PC-9 (cell line): ENCODE measurements at regions of chr15 and their contacts with region 1.

Region 1: GRCh38 chr15:78329625-78330024 is 10.5 kb upstream of the CRABP1 start:
- DNase-seq: peak; percentile 14 to 43
- H3K4me3 ChIP-seq: no peak overlapping the region
- H3K27ac ChIP-seq: no peak overlapping the region
- H3K4me1 ChIP-seq: peaks cover 8% of the 10 kb centered on the region; the same call in 1 of the 2 replicates
- H3K27me3 ChIP-seq: no peaks in the 10 kb centered on the region
- CTCF ChIP-seq: no peak

Region 2: GRCh38 chr15:77002954-77003912 is 1326.4 kb before region 1 on chr15:
- CTCF ChIA-PET with region 1: interaction called, 16 read pairs
- POLR2A ChIA-PET with region 1: no interaction called
- intact Hi-C with region 1: no loop called
- DNase-seq: no peak
- H3K4me3 ChIP-seq: no peak overlapping the region
- H3K27ac ChIP-seq: no peak overlapping the region
- H3K4me1 ChIP-seq: no peaks in the 10 kb centered on the region
- H3K27me3 ChIP-seq: peaks cover 4% of the 10 kb centered on the region; the same call in 1 of the 2 replicates
- CTCF ChIP-seq: no peak

Region 3: DNA sequence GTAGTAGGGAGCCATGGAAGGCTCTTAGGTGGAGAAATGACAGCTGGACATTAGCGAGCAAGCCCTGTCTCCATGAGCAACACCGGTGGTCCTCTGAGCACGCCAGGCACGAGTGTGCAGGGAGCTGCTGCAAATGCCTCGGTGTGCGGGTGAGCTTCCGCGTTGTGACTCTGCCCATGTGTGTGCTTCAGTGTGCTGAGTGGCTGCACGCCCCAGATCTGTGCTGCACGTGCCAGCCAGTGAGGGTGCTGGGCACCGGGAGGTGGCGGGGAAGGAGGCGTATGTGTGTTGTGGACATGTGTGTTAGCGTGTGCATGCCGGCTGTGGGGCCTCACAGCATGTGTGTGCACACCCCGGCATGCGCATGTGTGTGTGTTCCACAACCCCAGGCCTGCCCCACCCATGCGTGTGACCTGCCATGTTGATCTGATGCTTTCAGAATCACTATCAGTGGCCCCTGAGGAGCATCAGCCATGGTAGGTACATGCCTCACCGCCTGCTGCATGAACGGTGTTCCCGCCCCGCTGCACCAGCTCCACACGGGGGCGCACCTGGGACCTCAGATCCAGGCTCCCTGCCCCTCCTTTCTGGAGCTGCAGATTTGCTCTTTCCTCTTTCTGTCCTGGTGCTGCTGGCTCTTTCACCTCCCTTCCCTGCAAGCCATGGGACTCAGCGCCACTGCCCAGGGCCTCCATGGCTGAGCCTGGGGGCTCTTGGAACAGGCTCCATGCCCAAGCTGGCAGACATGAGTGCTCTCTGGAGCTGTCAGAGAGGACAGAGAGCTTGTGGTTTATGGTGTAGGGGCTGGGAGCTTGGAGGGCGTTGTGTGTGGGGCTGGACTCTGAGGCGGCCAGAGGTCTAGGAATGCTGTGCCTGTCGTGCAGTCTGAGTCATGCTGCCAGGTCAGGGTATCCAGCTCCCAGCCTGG is 421.5 kb before region 1 on chr15:
- CTCF ChIA-PET with region 1: no interaction called
- POLR2A ChIA-PET with region 1: no interaction called
- intact Hi-C with region 1: no loop called
- DNase-seq: peak in 1 of 2 experiments; percentile 57
- H3K4me3 ChIP-seq: no peak overlapping the region
- H3K27ac ChIP-seq: no peak overlapping the region
- H3K4me1 ChIP-seq: no peaks in the 10 kb centered on the region
- H3K27me3 ChIP-seq: no peaks in the 10 kb centered on the region
- CTCF ChIP-seq: no peak

Region 4: GRCh38 chr15:78353093-78353492 is 23.5 kb after region 1 on chr15:
- CTCF ChIA-PET with region 1: no interaction called
- POLR2A ChIA-PET with region 1: no interaction called
- intact Hi-C with region 1: loop called (anchors 1 kb)
- DNase-seq: no peak
- H3K4me3 ChIP-seq: no peak overlapping the region
- H3K27ac ChIP-seq: no peak overlapping the region
- H3K4me1 ChIP-seq: no peaks in the 10 kb centered on the region
- H3K27me3 ChIP-seq: 0 out of 2 replicates have a peak, but pooled peaks cover 4% of the 10 kb centered on the region
- CTCF ChIP-seq: no peak

Region 5: DNA sequence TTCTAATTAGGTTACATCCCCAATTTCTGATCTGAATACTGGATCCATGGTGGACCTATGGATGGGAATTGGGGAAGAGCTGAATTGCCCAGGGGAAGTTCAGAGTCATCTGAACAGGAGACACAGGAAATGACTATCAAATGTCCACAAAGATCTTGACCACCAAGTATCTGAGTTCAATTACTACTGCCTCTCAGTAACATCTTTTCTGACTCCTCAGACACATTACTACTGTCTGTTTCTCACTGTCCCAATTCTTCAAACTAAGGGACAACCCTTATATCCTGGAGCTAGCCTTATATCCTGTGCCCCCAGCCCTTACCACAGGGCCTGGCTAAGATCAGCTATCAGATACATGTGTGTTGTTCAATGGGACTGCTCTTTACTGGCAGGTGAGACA is 98.3 kb after region 1 on chr15:
- CTCF ChIA-PET with region 1: interaction called, 10 read pairs
- POLR2A ChIA-PET with region 1: no interaction called
- intact Hi-C with region 1: no loop called
- DNase-seq: no peak
- H3K4me3 ChIP-seq: no peak overlapping the region
- H3K27ac ChIP-seq: no peak overlapping the region
- H3K4me1 ChIP-seq: no peaks in the 10 kb centered on the region
- H3K27me3 ChIP-seq: peaks cover 19% of the 10 kb centered on the region; the same call in 1 of the 2 replicates
- CTCF ChIP-seq: no peak